ENCODE measurements at regions of chr21 and their contacts with region 1.

Region 1: DNA sequence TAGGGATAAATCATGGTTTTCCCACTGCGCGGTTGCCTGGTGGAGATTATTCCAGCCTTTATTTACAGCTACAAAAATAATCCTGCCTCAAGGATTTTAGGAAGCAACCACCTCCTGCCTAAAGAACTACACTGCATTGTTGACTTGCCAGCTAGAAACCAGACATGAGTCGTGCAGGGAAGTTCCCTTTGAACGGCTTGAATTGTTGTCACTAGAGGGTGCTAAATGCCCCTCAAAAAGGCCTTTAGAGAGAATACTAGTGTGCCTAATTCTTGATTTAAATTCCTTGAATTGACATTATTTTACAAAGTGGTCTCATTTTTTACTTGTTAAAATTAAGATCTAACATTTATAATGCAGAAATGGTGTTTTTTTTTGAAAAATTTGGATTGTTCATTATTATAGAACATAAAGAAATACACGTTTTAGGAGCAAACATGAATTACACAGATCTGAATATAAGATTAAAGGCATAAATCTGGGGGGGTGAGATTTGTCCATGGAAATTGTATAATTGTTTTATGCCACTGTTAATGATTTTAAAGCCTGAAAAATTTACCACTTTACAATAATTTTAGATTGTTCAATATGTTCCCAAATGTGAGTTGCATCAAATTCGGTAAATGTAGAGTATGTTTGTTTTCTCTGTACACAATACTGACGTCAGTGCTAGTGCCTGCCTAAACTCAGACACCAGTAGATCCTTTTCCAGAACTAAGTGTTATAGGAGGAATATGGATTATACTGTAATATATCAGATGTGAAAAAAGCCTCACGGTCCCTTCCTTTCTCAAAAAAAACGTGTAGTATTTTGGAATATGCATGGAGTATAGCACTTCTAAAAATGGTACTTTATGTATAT is 7.6 kb upstream of the ERG start:
- DNase-seq: peak in 1 of 2 donors; percentile 53
- ATAC-seq: peak; percentile 46 to 78 (median 65)
- H3K4me3 ChIP-seq: no peak overlapping the region
- H3K4me3 Mint-ChIP-seq: peak overlapping the region; percentile 52
- H3K27ac ChIP-seq: no peak overlapping the region
- H3K27ac Mint-ChIP-seq: no peak overlapping the region
- H3K4me1 ChIP-seq: peaks cover 8% of the 10 kb centered on the region
- H3K4me1 Mint-ChIP-seq: peaks cover 9 to 17% of the 10 kb centered on the region in 2 donors
- H3K27me3 ChIP-seq: no peaks in the 10 kb centered on the region
- H3K27me3 Mint-ChIP-seq: peaks cover 14 to 33% of the 10 kb centered on the region in 2 donors
- CTCF ChIP-seq: no peak

Region 2: GRCh38 chr21:38661197-38661871 is 155.4 kb after region 1 on chr21:
- intact Hi-C with region 1: no loop called
- DNase-seq: no peak
- ATAC-seq: no peak
- H3K4me3 ChIP-seq: peak overlapping the region; percentile 13
- H3K4me3 Mint-ChIP-seq: peak overlapping the region; percentile 77
- H3K27ac ChIP-seq: no peak overlapping the region
- H3K27ac Mint-ChIP-seq: no peak overlapping the region
- H3K4me1 ChIP-seq: peaks cover 8% of the 10 kb centered on the region
- H3K4me1 Mint-ChIP-seq: peaks cover 5 to 10% of the 10 kb centered on the region in 2 donors
- H3K27me3 ChIP-seq: peaks cover 13% of the 10 kb centered on the region
- H3K27me3 Mint-ChIP-seq: peaks cover 49 to 71% of the 10 kb centered on the region in 2 donors
- CTCF ChIP-seq: no peak

Region 3: DNA sequence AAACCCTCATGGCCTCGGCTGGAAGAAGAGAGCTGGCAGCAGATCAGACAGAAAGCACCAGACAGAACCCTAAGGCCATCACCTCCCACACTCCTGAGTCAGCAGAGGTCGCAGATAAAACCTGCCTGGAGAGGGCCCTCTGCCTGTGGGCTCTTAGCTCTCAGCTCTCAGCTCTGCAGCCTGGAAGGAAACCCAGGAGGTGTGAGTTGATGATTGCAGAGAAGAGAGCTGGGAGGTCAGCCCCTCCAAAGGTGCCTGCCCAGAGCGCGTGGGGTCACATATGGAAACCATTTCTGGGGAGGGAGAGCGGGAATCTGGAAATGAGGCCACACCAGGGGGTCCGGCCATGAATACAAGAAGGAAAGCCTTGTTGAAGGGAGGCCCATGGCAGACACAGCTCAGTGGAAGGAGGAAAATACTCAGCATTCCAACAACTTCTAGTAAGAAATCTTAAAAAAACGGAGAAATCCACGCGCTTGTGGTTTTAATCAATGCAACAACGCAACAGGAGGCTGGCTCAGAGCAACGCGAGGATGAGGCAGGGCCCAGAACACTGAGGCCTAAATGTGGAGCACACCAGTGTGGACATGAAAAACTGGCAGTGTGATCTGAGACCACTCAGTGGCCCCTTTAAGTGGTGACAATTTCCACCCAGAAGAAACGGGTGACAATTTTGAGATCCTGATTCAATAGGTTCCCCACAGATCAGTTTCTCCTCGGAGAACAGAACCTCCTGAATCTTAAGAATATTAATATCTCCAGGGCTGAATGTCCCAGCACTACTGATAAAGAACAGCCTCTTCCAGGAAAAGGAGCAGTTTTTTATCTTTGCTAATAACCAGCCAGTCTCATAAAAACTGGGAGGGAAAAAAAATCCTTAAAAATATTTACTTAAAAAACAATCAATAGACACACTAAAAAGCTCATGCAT is 631.6 kb after region 1 on chr21:
- intact Hi-C with region 1: loop called (anchors 5 kb)
- DNase-seq: no peak
- ATAC-seq: no peak
- H3K4me3 ChIP-seq: no peak overlapping the region
- H3K4me3 Mint-ChIP-seq: no peak overlapping the region
- H3K27ac ChIP-seq: no peak overlapping the region
- H3K27ac Mint-ChIP-seq: no peak overlapping the region
- H3K4me1 ChIP-seq: no peaks in the 10 kb centered on the region
- H3K4me1 Mint-ChIP-seq: no peaks in the 10 kb centered on the region
- H3K27me3 ChIP-seq: no peaks in the 10 kb centered on the region
- H3K27me3 Mint-ChIP-seq: peaks cover 5 to 8% of the 10 kb centered on the region in 2 donors
- CTCF ChIP-seq: no peak